Astrocyte of the cerebellum (primary cell): ENCODE measurements at regions of chr9 and their contacts with region 1.

Region 1: DNA sequence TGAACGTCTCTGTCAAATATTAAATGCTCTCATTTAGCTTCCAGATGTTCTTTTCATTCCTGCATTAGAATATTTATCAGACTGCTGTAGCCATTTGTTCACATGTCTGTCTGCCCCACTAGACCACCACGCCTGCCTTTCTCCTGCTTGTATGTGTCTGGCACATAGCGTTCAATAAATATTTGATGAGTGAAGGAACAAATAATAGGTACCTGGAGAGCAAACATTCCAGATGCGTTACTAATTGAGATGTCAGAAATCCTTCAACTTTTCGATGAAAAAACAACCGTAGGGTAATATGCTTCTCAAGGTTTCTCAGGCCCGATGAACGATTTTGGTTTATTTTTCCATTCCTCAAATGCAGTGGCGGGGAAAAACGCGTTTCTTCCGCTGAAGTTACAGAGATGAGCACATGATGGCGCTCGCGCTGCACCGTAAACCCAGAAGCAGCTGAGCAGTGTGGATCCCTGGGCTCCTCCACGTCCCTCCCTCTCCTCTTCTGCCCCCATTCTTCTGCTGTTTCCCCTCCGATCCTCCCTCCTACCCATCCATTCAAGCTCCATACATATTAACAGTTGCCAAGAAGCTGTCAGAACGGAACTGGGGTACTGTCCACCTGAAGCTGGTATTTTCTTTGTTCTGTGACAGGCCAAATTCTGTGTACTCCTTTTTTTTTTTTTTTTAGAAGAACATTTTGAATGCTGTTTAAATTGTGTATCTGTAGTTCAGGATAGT is 245.4 kb downstream of the MPDZ start:
- DNase-seq: peak; percentile 44
- H3K4me3 ChIP-seq: peak overlapping the region; percentile 30
- CTCF ChIP-seq: peak; percentile 80

Region 2: GRCh38 chr9:12988253-12988652 is 45.9 kb before region 1 on chr9:
- in situ Hi-C with region 1: no loop called
- DNase-seq: no peak
- H3K4me3 ChIP-seq: no peak overlapping the region
- CTCF ChIP-seq: no peak

Region 3: GRCh38 chr9:13088720-13089427 is 54.7 kb after region 1 on chr9:
- in situ Hi-C with region 1: loop called (anchors 5 kb)
- DNase-seq: peak; percentile 42
- H3K4me3 ChIP-seq: no peak overlapping the region
- CTCF ChIP-seq: peak; percentile 53

Region 4: GRCh38 chr9:13529321-13530104 is 495.4 kb after region 1 on chr9:
- in situ Hi-C with region 1: no loop called
- DNase-seq: no peak
- H3K4me3 ChIP-seq: no peak overlapping the region
- CTCF ChIP-seq: no peak